SK-MEL-5 (cell line): ENCODE measurements at regions of chr17 and their contacts with region 1.

Region 1: GRCh38 chr17:77542551-77543490 is 402.1 kb downstream of the SEC14L1 start:
- DNase-seq: peak; percentile 95

Region 2: GRCh38 chr17:77437017-77437416 is 105.8 kb before region 1 on chr17:
- in situ Hi-C with region 1: no loop called
- DNase-seq: peak; percentile 38

Region 3: DNA sequence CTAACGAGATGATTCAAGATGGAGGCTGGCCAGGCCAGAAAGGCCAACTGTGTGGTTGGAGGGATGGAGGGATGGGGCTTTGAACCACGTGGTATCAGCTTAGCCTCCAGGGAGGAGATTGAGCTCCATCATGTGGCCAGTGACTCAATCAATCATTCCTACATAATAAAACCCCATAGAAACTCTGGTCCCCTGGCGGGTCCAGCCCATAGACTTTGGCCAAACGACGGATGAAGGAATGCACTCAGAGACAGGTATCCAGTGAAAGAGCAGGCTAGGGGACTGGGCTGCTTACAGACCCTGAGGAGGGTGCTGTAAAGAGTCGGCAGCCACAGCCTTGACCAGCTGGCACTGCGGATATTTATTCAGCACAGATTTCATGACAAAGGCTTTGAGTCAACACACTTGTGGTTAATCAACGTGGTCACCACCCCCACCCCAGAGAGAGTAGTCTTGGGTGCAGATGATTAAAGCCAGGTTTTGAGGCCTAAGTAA is 106.9 kb after region 1 on chr17:
- in situ Hi-C with region 1: loop called (anchors 10 kb)
- DNase-seq: peak; percentile 78

Region 4: GRCh38 chr17:77690271-77691161 is 147.7 kb after region 1 on chr17:
- in situ Hi-C with region 1: no loop called
- DNase-seq: no peak

Region 5: DNA sequence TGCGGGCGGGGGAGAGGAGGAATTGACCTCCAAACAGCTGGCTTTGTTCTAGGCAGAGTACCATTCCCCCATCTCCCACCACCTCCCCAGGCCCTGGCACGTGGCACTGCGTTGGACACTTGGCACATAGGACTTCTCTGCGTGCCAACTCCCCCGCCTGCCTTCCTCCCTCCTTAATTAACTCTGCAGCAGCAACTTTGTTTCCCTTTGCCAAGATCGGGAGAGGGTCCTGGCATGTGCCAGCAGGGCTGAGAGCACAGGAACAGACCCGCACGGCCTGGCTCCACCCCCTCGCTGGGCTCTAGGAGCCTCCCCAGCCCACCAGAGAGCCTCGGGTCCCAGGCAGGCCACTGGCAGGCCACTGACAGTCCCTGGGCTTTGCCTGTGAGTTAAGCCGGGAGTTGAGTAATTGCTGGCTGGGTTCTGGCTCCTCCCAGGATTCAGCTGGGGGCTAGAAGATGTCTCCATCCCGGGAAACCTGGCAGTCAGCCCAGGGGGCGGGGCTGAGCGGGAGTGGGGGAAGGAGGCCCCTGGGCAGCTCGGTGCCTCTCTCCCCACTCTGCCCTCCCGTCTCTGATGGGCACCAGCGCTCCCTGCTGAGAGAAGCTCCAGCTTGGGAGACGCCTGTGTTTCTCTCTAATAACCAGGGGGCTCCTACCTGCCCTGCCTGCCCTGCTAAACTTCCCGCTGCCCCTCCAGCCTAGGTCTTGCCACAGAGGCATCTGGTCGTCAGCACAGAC is 191.7 kb after region 1 on chr17:
- in situ Hi-C with region 1: loop called (anchors 10 kb)
- DNase-seq: peak; percentile 21